A549 (cell line): ENCODE measurements at regions of chr1 and their contacts with region 1.

Region 1: DNA sequence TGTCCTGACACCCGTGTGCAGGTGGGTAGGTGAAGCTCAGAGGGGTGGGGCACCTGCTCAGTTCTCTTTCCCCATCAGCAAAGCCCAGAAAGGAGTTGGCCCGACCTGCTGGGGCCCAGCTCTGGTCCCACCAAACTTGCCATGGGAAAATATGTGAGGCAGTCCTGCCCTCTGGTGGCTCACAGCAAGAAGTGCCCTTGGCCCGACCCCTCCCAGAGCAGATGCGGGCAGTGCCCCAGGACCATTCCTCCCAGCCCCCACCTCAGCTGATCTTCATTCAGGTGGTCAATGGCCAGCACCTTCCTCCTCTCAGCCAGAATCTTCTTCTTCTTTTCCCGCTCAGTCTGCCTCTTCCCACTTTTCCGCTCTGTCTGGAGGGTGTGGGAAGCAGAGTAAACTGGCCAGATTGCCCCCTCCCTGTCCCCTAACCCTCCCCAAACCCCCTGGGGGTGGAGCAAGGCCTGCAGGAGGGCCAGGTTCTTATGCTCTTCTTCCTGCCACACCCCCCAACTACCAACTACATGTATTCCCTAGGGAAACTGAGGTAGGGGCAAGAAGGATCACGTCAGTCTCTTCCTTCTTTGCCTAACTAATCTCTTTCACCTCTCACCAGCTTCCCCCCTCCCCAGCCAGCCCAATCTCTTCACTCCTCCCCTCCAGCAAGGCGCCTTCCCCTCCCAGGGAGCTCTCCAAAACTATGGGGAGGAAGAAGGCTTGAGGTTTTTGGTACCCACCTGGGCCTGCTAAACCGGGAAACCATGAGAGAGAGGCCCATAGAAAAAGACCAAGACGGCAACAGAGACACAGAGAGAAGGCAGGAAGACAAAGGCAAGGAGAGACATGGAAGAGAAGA is 15.6 kb downstream of the TNNT2 start:
- DNase-seq: peak; percentile 47 to 96
- ATAC-seq: peak; percentile 75 to 91; a peak in 5 of 6 replicates
- H3K4me3 ChIP-seq: no peak overlapping the region
- H3K27ac ChIP-seq: peak overlapping the region in 1 of 2 experiments; percentile 50; a peak in 3 of 6 replicates
- H3K4me1 ChIP-seq: no peaks in the 10 kb centered on the region; the same call in 2 of the 3 replicates
- CTCF ChIP-seq: peak; percentile 91
- EP300 ChIP-seq: no peak
- POLR2A ChIP-seq: no peak
- RAD21 ChIP-seq: peak; percentile 96 to 99

Region 2: GRCh38 chr1:201244026-201244425 is 117.9 kb before region 1 on chr1:
- CTCF ChIA-PET with region 1: interaction called, 480 read pairs
- POLR2A ChIA-PET with region 1: no interaction called
- DNase-seq: no peak
- ATAC-seq: no peak
- H3K4me3 ChIP-seq: no peak overlapping the region
- H3K27ac ChIP-seq: no peak overlapping the region
- H3K4me1 ChIP-seq: 0 out of 3 replicates have a peak, but pooled peaks cover 3% of the 10 kb centered on the region
- CTCF ChIP-seq: no peak
- EP300 ChIP-seq: no peak
- POLR2A ChIP-seq: no peak
- RAD21 ChIP-seq: no peak

Region 3: DNA sequence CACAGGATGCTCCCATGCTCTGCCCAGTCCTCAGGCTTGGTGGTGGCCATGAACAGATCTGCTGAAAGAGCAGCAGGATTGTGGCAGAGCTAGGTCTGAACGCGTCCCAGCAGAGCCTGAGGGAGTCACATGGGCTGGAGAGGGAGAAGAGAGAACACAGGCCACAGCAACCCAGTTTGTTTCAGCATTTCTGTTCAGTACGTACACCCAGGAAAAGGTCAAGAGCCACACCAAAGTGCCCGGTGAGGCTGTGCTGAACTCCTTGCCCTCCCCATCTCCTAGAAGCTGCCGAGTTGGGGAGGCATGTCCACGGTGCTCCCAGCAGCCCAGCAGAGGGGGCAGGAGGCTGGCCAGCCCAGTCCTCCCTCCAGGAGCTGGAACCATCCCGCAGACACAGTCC is 73.1 kb before region 1 on chr1:
- CTCF ChIA-PET with region 1: interaction called, 14 read pairs
- POLR2A ChIA-PET with region 1: no interaction called
- DNase-seq: no peak
- ATAC-seq: no peak; a peak in 1 of 6 replicates
- H3K4me3 ChIP-seq: no peak overlapping the region
- H3K27ac ChIP-seq: 0 out of 6 replicates have a peak overlapping the region, but pooled peaks of 1 of the 2 experiments have one; percentile 5
- H3K4me1 ChIP-seq: no peaks in the 10 kb centered on the region
- CTCF ChIP-seq: no peak
- EP300 ChIP-seq: no peak
- POLR2A ChIP-seq: no peak
- RAD21 ChIP-seq: no peak

Region 4: DNA sequence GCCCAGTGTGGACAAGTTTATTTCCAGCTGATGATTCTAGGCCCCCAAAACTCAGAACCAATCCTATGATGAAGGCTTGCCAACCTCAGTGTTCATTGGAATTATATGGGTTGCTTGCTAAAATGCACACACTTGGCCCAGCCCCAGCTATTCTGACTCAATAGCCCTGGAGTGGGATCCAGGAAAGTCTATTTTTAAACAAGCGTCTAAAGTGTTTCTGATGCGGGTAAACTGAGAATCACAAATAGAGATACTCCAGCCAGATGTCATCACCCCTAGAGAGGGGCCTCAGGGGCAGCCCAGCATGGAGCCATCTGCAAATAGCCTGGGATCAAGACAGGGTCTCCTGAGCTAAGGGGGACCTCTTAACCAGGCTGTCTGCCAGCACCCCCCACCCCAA is 32.6 kb before region 1 on chr1:
- CTCF ChIA-PET with region 1: interaction called, 32 read pairs
- POLR2A ChIA-PET with region 1: no interaction called
- DNase-seq: no peak
- ATAC-seq: no peak
- H3K4me3 ChIP-seq: no peak overlapping the region
- H3K27ac ChIP-seq: no peak overlapping the region
- H3K4me1 ChIP-seq: no peaks in the 10 kb centered on the region
- CTCF ChIP-seq: no peak
- EP300 ChIP-seq: no peak
- POLR2A ChIP-seq: no peak
- RAD21 ChIP-seq: no peak

Region 5: GRCh38 chr1:201385299-201385891 is 23.5 kb after region 1 on chr1:
- CTCF ChIA-PET with region 1: interaction called, 26 read pairs
- POLR2A ChIA-PET with region 1: no interaction called
- DNase-seq: peak; percentile 61 to 76
- ATAC-seq: peak; percentile 85 to 95
- H3K4me3 ChIP-seq: no peak overlapping the region
- H3K27ac ChIP-seq: peak overlapping the region; percentile 63 to 77
- H3K4me1 ChIP-seq: peaks cover 32% of the 10 kb centered on the region
- CTCF ChIP-seq: peak; percentile 93
- EP300 ChIP-seq: no peak
- POLR2A ChIP-seq: no peak
- RAD21 ChIP-seq: peak; percentile 81 to 84

Region 6: DNA sequence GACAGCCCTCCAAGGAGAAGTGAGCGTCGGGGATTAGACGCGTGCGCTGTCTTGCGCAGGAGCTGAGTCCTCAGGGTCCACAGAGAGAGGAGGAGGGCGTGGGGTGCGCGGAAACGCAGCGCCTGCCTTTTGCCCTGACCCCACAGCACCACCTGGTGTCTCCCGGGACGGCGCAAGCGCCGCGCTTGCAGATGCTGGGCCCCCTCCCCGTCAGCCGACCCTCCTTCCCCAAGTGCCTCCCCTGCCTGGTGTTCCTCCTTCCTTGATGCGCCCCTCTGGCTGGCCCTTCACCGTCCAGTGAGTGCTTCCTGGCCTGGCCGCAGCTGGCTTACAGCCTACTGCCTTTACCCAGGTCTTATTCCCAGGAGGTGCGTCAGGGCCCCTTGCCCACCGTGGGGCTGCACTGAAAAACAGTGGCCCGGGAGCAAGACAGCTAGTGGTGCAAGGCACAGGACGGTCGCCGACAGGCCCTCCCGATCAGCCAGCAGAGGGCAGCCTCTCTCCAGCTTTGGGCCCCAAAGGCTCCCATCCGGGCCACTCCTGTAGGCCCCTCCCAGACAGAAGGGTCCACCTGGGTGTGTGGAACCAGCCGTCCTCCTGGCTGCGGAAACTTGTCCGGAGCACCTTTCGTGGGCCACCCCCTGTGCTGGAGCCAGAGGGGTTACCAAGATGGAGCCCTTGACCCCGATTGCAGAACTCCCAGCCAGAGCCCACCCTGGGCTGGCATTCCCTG is 120.0 kb after region 1 on chr1:
- CTCF ChIA-PET with region 1: no interaction called
- POLR2A ChIA-PET with region 1: no interaction called
- DNase-seq: peak; percentile 86 to 92
- ATAC-seq: peak; percentile 55 to 83
- H3K4me3 ChIP-seq: no peak overlapping the region
- H3K27ac ChIP-seq: peak overlapping the region; percentile 77 to 86
- H3K4me1 ChIP-seq: peaks cover 50% of the 10 kb centered on the region
- CTCF ChIP-seq: peak; percentile 93
- EP300 ChIP-seq: no peak
- POLR2A ChIP-seq: no peak
- RAD21 ChIP-seq: peak; percentile 97 to 98

Region 7: GRCh38 chr1:201515895-201516294 is 154.0 kb after region 1 on chr1:
- CTCF ChIA-PET with region 1: no interaction called
- POLR2A ChIA-PET with region 1: no interaction called
- DNase-seq: no peak
- ATAC-seq: no peak
- H3K4me3 ChIP-seq: no peak overlapping the region
- H3K27ac ChIP-seq: no peak overlapping the region
- H3K4me1 ChIP-seq: peaks cover 20% of the 10 kb centered on the region
- CTCF ChIP-seq: no peak
- EP300 ChIP-seq: no peak
- POLR2A ChIP-seq: no peak
- RAD21 ChIP-seq: no peak

Region 8: DNA sequence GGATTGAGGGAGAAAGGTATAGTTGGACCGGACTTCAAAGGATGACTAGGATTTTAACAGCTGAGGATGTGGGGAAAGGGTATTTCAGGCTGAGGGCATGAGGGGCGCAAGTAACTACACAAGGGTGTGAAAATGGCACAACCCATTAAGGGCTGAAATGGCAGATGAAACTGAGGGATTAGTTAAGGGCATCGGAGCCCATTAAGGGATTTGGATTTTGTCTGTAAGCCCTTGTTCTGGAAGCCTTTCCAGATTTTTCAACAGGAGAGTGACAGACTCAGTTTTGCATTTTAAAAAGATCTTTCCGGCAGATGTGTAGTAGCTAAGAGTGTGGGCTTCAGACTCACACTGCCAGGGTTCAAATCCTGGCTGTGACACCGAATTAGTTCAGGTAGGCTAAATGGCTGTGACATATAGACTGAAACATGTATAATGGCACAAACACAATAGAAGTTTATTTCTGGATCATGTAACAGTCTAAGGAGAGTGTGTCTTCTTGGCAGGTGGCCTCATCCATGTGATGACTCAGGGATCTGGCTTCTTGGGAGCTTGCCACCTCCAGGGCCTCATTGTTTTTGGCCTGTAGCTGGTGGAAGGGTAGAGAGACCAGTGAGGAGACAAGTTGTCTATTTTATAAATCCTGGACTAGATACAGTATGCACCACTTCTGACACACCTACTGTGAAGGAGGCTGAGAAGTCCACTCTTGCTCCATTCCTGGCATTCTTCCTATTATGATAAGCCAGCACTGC is 930.3 kb after region 1 on chr1:
- CTCF ChIA-PET with region 1: no interaction called
- POLR2A ChIA-PET with region 1: no interaction called
- DNase-seq: peak; percentile 57 to 68
- ATAC-seq: peak; percentile 69 to 83
- H3K4me3 ChIP-seq: no peak overlapping the region
- H3K27ac ChIP-seq: peak overlapping the region; percentile 45 to 59; a peak in 5 of 6 replicates
- H3K4me1 ChIP-seq: peaks cover 22% of the 10 kb centered on the region
- CTCF ChIP-seq: no peak
- EP300 ChIP-seq: no peak
- POLR2A ChIP-seq: no peak
- RAD21 ChIP-seq: no peak